ENCODE measurements at regions of chr10 and their contacts with region 1.

Region 1: GRCh38 chr10:98170249-98171117 is 36.0 kb downstream of the R3HCC1L start:
- DNase-seq: peak; percentile 14
- H3K4me3 Mint-ChIP-seq: no peak overlapping the region
- H3K27ac Mint-ChIP-seq: no peak overlapping the region
- H3K4me1 Mint-ChIP-seq: peaks cover 10% of the 10 kb centered on the region
- H3K27me3 Mint-ChIP-seq: no peaks in the 10 kb centered on the region

Region 2: DNA sequence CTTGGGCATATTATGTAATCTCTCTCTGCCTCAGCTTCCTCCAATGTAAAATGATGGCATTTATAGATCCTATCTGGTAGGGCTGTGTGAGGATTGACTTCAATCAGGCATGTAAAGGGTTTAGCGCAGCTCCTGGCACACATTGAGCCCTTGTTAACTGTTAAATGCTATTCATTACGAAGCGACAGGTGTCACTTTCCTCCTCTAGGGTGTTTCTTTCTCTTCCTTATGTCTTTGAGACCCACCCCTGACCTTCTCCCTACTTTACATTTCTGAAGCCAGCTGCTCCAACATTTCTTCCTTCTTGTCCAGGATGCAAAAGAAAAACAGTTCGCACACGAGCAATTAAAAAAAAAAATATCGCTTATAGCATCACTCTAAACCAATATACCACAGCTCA is 41.7 kb before region 1 on chr10:
- CTCF ChIA-PET with region 1: interaction called, 10 read pairs
- POLR2A ChIA-PET with region 1: no interaction called
- intact Hi-C with region 1: no loop called
- DNase-seq: no peak
- H3K4me3 Mint-ChIP-seq: no peak overlapping the region
- H3K27ac Mint-ChIP-seq: no peak overlapping the region
- H3K4me1 Mint-ChIP-seq: no peaks in the 10 kb centered on the region
- H3K27me3 Mint-ChIP-seq: peaks cover 23% of the 10 kb centered on the region

Region 3: GRCh38 chr10:98269072-98269912 is 98.8 kb after region 1 on chr10:
- CTCF ChIA-PET with region 1: interaction called, 10 read pairs
- POLR2A ChIA-PET with region 1: no interaction called
- intact Hi-C with region 1: no loop called
- DNase-seq: no peak
- H3K4me3 Mint-ChIP-seq: no peak overlapping the region
- H3K27ac Mint-ChIP-seq: no peak overlapping the region
- H3K4me1 Mint-ChIP-seq: peaks cover 1% of the 10 kb centered on the region
- H3K27me3 Mint-ChIP-seq: peaks cover 39% of the 10 kb centered on the region

Region 4: GRCh38 chr10:98309366-98310355 is 139.2 kb after region 1 on chr10:
- CTCF ChIA-PET with region 1: interaction called, 49 read pairs
- POLR2A ChIA-PET with region 1: no interaction called
- intact Hi-C with region 1: loop called (anchors 1 kb)
- DNase-seq: peak; percentile 40
- H3K4me3 Mint-ChIP-seq: no peak overlapping the region
- H3K27ac Mint-ChIP-seq: peak overlapping the region; percentile 39
- H3K4me1 Mint-ChIP-seq: peaks cover 2% of the 10 kb centered on the region
- H3K27me3 Mint-ChIP-seq: peaks cover 24% of the 10 kb centered on the region

Region 5: DNA sequence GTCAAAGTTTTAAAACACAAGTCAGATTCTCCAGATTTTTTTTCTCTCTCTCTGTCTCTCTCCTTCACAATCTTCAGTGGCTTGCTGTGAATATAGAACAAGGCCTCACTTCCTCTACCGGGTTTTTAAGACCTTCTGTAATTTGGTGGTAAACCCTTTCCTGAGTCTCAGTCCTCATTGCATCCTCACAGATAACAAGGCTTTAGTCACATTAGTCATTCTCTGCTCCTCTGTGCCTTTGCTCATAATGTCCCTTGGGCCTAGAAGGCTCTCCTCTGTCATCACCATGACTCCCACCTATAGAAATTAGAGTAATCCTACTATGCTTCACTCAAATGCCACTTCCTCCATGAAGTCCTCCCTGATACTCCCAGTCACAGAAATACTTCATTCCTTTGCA is 449.0 kb after region 1 on chr10:
- CTCF ChIA-PET with region 1: no interaction called
- POLR2A ChIA-PET with region 1: no interaction called
- intact Hi-C with region 1: no loop called
- DNase-seq: no peak
- H3K4me3 Mint-ChIP-seq: no peak overlapping the region
- H3K27ac Mint-ChIP-seq: no peak overlapping the region
- H3K4me1 Mint-ChIP-seq: no peaks in the 10 kb centered on the region
- H3K27me3 Mint-ChIP-seq: no peaks in the 10 kb centered on the region